HepG2 (cell line): ENCODE measurements at regions of chr16 and their contacts with region 1.

Region 1: DNA sequence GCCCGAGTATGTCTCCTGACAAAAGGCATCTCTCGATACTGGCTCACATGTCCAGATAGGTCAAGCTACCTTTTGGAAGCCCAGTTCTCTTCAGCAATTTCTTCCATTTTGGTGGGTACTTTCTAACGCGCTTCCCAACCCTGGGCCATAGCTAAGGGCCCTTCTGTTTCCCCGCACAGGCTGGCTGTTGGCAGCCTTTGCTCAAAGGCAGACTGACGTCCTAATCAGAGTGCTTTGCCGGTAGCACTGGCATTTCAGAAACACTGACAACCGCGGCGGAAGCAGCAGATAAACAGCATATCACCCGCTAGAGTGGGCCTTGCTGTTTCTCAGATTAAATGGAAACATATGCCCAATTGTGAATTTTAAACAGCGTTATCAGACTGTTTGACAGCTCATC is 49.3 kb upstream of the MPHOSPH6 start:
- DNase-seq: no peak
- ATAC-seq: no peak
- H3K4me3 ChIP-seq: no peak overlapping the region
- H3K27ac ChIP-seq: no peak overlapping the region
- H3K4me1 ChIP-seq: no peaks in the 10 kb centered on the region
- H3K27me3 ChIP-seq: no peaks in the 10 kb centered on the region
- CTCF ChIP-seq: no peak
- EP300 ChIP-seq: no peak
- POLR2A ChIP-seq: no peak
- RAD21 ChIP-seq: no peak

Region 2: GRCh38 chr16:82201931-82202330 is 17.4 kb before region 1 on chr16:
- CTCF ChIA-PET with region 1: no interaction called
- POLR2A ChIA-PET with region 1: no interaction called
- in situ Hi-C with region 1: no loop called
- intact Hi-C with region 1: loop called (anchors 1 kb)
- DNase-seq: no peak
- ATAC-seq: no peak
- H3K4me3 ChIP-seq: no peak overlapping the region
- H3K27ac ChIP-seq: no peak overlapping the region
- H3K4me1 ChIP-seq: no peaks in the 10 kb centered on the region
- H3K27me3 ChIP-seq: no peaks in the 10 kb centered on the region
- CTCF ChIP-seq: no peak
- EP300 ChIP-seq: no peak
- POLR2A ChIP-seq: no peak
- RAD21 ChIP-seq: no peak